ENCODE measurements at regions of chr21 and their contacts with region 1.

Region 1: DNA sequence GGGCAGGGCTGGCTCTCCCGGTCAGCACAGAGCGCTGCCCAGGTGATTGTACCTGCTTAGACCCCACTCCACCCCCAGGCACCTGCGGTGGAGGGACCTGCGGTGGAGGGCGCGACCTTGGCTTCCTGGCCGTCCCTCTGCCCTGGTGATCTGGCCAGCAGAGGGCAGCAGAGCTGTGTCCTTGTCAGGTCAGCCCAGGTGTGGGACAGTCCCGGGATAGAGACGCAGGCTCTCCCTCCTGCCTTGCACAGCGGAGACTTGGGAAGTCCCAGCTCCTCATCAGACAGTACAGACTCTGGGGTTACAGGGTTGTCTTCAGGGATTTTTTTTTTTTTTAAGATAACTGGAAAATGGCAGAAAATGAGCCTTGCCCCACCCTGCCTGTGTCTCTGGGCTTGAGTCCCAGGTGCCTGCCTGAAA is 10.0 kb downstream of the SLX9 start:
- DNase-seq: peak; percentile 95
- H3K4me3 ChIP-seq: peak overlapping the region in 1 of 2 experiments; percentile 33; a peak in 1 of 4 replicates
- H3K27ac ChIP-seq: no peak overlapping the region
- H3K4me1 ChIP-seq: peaks cover 0 to 2% of the 10 kb centered on the region in 2 experiments; a peak in 1 of 4 replicates
- H3K27me3 ChIP-seq: no peaks in the 10 kb centered on the region
- CTCF ChIP-seq: peak; percentile 93
- EP300 ChIP-seq: no peak
- RAD21 ChIP-seq: peak; percentile 91

Region 2: GRCh38 chr21:44939532-44940115 is 10.2 kb before region 1 on chr21 and contains the start of gene SLX9:
- CTCF ChIA-PET with region 1: interaction called, 20 read pairs
- POLR2A ChIA-PET with region 1: no interaction called
- DNase-seq: peak; percentile 98
- H3K4me3 ChIP-seq: peak within 1 kb of the TSS; percentile 97 to 98
- H3K27ac ChIP-seq: peak within 1 kb of the TSS; percentile 41 to 63; a peak in 3 of 4 replicates
- H3K4me1 ChIP-seq: peaks cover 8 to 19% of the 10 kb centered on the region in 2 experiments; a peak in 3 of 4 replicates
- H3K27me3 ChIP-seq: no peaks in the 10 kb centered on the region
- CTCF ChIP-seq: no peak
- EP300 ChIP-seq: peak in 1 of 2 experiments; percentile 34; a peak in 1 of 4 replicates
- RAD21 ChIP-seq: no peak
- polyA plus RNA-seq, gene SLX9: 27.1 and 42.9 TPM in 2 replicates

Region 3: DNA sequence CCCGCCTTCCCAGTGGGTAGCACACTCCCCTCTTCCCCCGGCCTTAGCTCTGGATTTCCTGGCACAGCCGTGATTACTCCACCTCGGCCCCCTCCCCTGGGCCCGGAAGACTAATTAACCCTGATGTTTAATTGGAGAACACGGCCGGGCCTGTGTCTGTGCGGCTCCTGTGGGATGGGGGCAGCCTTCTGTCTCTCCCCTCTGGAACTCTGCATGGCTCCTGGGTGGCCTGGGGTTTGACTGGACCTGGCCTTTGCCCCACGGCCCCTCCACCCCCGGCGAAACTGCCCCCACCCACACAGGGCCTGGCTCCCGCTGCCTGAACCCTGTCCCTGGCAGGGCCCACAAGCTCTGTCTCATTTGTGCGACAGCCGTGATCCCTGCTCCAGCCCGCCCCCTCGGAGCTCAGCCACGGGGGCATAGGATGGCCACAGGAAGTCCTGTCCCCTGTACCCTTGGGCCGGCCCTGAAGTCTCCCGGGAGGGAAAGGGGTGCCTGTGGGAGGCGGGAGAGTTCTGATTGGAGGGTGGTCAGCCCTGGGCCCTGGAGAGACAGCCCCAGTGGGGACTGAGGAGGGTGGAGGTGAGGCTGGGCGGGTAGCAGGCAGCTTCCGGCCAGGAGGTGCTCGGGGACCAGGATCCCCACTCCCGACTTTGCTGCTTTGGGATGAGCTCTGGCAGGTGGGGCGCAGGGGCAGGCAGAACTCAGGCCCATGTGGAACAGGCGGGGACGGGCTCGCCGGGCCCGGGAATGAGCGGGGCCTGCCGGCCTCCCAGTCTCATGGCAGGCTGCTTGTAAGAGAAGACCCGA is 35.0 kb after region 1 on chr21:
- CTCF ChIA-PET with region 1: interaction called, 25 read pairs
- POLR2A ChIA-PET with region 1: no interaction called
- DNase-seq: peak; percentile 76
- H3K4me3 ChIP-seq: no peak overlapping the region
- H3K27ac ChIP-seq: peak overlapping the region in 1 of 2 experiments; percentile 75; a peak in 2 of 4 replicates
- H3K4me1 ChIP-seq: peaks cover 0 to 68% of the 10 kb centered on the region in 2 experiments; a peak in 3 of 4 replicates
- H3K27me3 ChIP-seq: no peaks in the 10 kb centered on the region
- CTCF ChIP-seq: no peak
- EP300 ChIP-seq: no peak
- RAD21 ChIP-seq: no peak

Region 4: DNA sequence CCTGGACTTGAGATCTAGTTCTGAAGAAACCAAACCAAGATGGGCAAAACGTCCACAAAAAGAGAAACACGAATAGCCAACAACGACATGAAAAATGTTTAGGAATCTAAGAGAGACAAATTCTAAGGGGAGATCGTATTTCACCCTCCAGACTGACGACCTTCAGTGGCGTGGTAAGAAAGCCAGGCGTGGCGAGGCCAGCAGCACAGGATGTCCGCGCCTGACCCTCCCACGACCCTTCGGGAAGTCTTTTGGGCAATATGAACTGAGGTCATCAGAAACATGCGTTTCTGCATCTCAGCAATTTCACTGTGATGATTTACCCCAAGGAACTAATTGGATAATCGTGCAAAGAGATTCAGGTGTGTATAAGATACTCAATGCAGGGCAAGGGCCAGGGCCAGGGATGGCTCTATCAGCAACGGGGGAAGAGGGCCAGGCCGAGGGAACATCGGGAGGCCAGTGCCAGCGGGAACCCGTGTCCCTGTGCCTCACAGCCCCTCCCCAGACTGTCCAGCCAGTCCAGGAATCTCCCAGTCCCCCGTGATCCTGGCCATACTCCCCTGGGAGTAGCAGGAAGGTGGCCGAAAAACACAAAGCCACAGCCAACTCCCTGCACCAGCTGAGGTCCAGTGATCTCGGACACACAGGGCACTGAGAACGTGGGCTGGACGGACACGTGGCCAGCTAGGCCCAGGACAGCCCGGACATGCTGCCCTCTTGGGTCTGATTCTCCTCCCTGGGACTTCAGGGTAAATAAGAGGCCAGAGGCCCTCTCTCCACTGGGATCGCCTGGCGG is 71.0 kb after region 1 on chr21:
- CTCF ChIA-PET with region 1: no interaction called
- POLR2A ChIA-PET with region 1: no interaction called
- DNase-seq: no peak
- H3K4me3 ChIP-seq: no peak overlapping the region
- H3K27ac ChIP-seq: no peak overlapping the region
- H3K4me1 ChIP-seq: no peaks in the 10 kb centered on the region; a peak in 1 of 4 replicates
- H3K27me3 ChIP-seq: no peaks in the 10 kb centered on the region
- CTCF ChIP-seq: no peak
- EP300 ChIP-seq: no peak
- RAD21 ChIP-seq: no peak

Region 5: DNA sequence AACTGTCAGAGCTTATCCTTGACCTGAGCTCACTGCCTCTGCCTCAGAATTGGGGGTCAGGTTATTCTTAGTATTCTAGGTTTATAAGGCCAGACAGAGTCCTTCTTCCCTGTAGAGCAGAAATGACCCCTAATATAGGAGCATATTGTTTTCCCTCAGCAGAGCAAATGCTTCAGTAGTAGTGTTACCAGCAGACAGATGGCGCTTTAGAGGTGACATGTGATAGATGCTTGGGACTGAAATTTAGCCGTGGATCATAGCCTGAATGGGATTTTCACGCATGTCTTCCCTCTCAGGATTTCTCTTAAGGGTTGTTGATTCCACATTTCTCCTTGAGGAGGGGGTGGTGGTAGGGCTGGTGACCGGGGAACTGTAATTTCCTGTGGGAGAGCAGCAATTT is 149.1 kb after region 1 on chr21:
- CTCF ChIA-PET with region 1: interaction called, 24 read pairs
- POLR2A ChIA-PET with region 1: no interaction called
- DNase-seq: peak; percentile 54
- H3K4me3 ChIP-seq: no peak overlapping the region
- H3K27ac ChIP-seq: no peak overlapping the region
- H3K4me1 ChIP-seq: peaks cover 20 to 52% of the 10 kb centered on the region in 2 experiments; a peak in 3 of 4 replicates
- H3K27me3 ChIP-seq: no peaks in the 10 kb centered on the region
- CTCF ChIP-seq: peak; percentile 46
- EP300 ChIP-seq: no peak
- RAD21 ChIP-seq: peak; percentile 45

Region 6: DNA sequence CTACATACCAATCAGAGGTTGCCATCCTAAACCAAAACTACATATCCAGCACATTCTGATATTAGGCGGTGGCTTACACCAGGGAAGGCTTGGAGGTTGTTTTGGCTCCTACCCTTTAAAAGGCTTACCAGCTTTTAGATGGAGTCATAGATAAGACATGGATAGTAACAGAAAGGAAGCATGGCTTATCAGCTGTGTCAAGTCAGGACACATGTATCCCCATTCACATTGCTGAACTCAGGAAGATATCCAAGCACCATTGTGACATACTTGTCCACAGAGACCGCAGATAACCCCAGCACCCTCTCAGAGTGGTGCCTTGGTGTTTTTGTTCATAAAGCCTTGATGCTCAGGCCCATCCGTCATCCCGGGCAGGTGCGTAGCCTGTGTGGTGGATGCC is 164.3 kb after region 1 on chr21:
- CTCF ChIA-PET with region 1: interaction called, 28 read pairs
- POLR2A ChIA-PET with region 1: no interaction called
- DNase-seq: no peak
- H3K4me3 ChIP-seq: no peak overlapping the region
- H3K27ac ChIP-seq: no peak overlapping the region
- H3K4me1 ChIP-seq: peaks cover 0 to 15% of the 10 kb centered on the region in 2 experiments; a peak in 1 of 4 replicates
- H3K27me3 ChIP-seq: no peaks in the 10 kb centered on the region
- CTCF ChIP-seq: no peak
- EP300 ChIP-seq: no peak
- RAD21 ChIP-seq: no peak

Region 7: DNA sequence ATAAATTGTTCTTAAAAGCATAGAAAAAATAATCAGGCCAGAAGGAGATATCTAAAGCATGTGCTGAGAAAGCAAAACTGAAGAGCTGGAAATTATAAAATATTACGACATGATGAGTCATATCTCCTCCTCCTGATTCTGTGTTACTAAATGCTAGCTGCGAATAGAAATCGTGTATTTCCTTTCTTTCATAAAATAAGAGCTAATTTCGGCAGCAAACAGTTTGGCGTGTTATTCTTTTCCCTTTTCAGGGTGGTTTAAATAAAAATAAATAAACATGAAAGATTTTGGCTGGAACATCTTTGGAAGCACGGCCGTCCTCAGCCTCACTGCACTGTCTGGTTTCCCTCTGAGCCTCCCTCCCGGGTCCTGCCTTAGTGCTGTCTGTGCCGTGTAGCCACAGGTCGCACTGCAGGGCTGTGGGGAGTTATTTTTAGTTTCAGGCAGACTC is 180.6 kb after region 1 on chr21:
- CTCF ChIA-PET with region 1: interaction called, 357 read pairs
- POLR2A ChIA-PET with region 1: interaction called, 5 read pairs
- DNase-seq: no peak
- H3K4me3 ChIP-seq: peak overlapping the region; percentile 30 to 58; a peak in 3 of 4 replicates
- H3K27ac ChIP-seq: peak overlapping the region; percentile 62 to 74; a peak in 3 of 4 replicates
- H3K4me1 ChIP-seq: peaks cover 8 to 22% of the 10 kb centered on the region in 2 experiments
- H3K27me3 ChIP-seq: no peaks in the 10 kb centered on the region
- CTCF ChIP-seq: no peak
- EP300 ChIP-seq: no peak
- RAD21 ChIP-seq: no peak

Measured in SK-N-SH (cell line).